Heart left ventricle (tissue), 16 donors: ENCODE measurements at regions of chr11 and their contacts with region 1.

Region 1: DNA sequence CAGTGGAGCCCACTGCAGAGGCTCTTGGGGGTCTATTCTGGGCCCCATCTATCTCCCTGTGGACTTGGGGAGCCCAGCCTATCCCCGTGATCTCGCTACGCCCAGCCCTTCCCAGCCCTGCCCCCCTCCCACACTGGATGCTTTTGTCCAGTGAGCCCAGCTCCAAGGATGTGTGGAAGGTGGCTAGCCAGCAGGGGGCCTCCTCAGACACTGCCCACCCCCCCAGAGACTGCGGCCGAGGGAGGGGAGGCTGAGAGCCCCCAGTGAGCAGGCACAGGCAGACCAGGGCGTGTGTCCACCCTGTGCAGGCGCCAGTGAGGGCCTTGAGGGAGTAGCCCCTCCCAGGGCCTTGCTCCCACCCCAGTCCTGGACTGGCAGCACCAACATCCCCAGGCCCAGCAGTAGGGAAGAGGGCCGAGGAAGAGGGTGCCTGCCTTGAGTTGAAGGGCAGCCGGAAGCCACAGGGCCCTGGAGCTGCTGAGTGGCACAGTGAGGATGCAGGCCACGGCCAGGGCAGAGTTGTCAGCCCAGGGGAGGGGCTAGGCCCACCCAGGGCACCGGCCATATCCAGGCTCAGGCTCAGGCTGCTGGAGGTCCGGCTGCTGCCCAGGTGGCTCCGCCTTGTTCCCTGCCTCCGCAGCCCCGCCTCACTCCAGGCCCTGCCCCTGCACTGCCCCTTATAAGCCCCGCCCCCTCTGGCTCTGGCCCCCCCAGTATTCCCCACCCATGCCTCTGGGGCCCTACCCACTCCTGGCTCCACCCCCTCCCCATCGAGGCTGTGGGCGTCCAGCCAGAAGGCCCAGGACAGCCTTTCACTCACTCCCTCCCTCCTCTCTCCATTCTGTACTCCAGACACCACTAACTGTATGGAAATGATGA is 28.0 kb downstream of the MOB2 start:
- DNase-seq: peak in 4 of 5 donors; percentile 45 to 63 (median 53)
- ATAC-seq: peak; percentile 26 to 49 (median 40)
- H3K4me3 ChIP-seq: peak overlapping the region in 1 of 12 donors; percentile 14
- H3K27ac ChIP-seq: peak overlapping the region in 3 of 12 donors; percentile 5 to 93 (median 50)
- H3K4me1 ChIP-seq: peaks cover 0 to 18% (median 3%) of the 10 kb centered on the region in 12 donors
- H3K27me3 ChIP-seq: no peaks in the 10 kb centered on the region
- CTCF ChIP-seq: peak in 8 of 12 donors; percentile 5 to 43 (median 20)
- POLR2A ChIP-seq: no peak

Region 2: DNA sequence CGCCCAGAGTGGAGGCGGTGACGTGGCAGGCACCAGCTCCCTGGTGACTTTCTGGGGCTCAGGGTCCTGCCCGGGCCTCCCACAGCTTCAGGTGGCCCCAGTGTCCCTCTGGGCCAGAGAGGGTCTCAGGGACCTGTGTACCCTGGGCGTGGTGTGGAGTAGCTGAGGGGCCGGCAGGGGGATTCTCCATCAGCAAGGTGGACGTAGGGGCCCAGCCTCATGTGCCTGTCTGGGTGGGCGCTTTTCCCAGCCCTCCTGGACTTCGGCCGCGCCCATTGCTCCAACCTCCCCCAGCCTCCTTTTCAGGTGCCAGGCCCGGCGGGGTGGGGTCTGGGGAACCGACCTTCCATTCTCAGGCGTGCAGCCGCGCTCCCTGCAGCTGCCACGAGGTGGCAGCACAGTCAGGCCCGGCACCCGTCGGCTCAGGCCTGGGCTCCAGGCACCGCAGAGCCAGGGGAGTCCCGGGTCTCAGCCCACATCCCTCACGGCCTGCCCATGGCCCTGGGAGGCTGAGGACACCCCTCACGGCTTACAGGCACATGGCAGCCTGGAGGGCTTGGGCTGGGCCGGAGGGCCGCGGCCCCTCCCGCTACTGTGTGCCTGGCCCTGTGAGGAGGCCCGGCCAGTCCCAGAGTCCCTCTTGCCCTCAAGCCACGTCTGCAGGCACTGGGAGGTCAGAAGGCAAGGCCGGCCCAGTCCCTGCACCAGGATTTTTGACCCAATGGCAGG is 255.6 kb before region 1 on chr11:
- intact Hi-C with region 1: loop called in 1 of 10 experiments (anchors 10 kb)
- DNase-seq: peak in 4 of 5 donors; percentile 19 to 81 (median 55)
- ATAC-seq: peak; percentile 28 to 84 (median 72)
- H3K4me3 ChIP-seq: no peak overlapping the region
- H3K27ac ChIP-seq: no peak overlapping the region
- H3K4me1 ChIP-seq: peaks cover 0 to 8% (median 0%) of the 10 kb centered on the region in 12 donors
- H3K27me3 ChIP-seq: peaks cover 0 to 35% (median 14%) of the 10 kb centered on the region in 9 donors
- CTCF ChIP-seq: peak; percentile 75 to 94 (median 91)
- POLR2A ChIP-seq: no peak

Region 3: DNA sequence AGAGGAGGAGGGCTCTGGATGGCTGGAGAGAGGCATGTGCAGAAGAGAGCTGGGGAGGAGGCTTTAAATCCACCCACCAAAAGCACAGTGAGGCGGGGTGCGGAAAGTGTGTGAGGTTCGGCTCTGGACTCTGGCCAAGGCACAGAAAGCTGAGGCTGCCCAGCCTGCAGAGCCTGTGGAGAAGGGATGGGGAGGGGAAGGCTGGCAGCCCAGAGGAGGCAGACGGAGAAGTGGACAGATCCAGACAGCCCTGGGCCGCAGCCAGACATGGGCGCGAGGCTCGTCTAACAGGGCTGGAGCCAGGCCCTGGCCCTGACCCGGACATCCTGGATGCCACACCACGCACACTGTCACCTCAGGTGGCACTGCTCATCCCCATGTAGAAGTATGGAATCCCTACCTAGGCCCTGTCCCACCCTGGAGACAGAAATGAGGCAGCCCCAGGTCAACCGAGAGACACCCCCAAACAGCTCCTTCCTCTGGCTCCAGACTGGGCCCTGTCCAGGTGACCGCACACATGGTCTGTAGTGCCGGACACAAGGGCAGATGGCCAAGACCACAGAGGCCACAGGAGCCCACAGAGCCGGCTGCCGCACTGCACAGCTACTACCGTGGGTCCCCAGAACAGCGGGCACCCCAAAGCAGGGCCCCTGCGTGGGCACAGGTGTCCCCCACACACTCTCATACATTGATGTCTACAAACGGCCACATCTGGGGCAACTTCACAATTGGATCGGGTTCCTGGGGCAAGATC is 44.6 kb after region 1 on chr11:
- intact Hi-C with region 1: loop called in 1 of 10 experiments (anchors 5 kb)
- DNase-seq: peak; percentile 51 to 85 (median 75)
- ATAC-seq: peak; percentile 72 to 84 (median 74)
- H3K4me3 ChIP-seq: no peak overlapping the region
- H3K27ac ChIP-seq: peak overlapping the region in 10 of 12 donors; percentile 15 to 69 (median 49)
- H3K4me1 ChIP-seq: peaks cover 34 to 82% (median 63%) of the 10 kb centered on the region in 12 donors
- H3K27me3 ChIP-seq: no peaks in the 10 kb centered on the region
- CTCF ChIP-seq: no peak
- POLR2A ChIP-seq: no peak

Region 4: GRCh38 chr11:1917671-1918516 is 459.3 kb after region 1 on chr11:
- intact Hi-C with region 1: no loop called
- DNase-seq: peak in 4 of 5 donors; percentile 66 to 84 (median 77)
- ATAC-seq: peak; percentile 45 to 67 (median 59)
- H3K4me3 ChIP-seq: peak overlapping the region in 8 of 12 donors; percentile 7 to 40 (median 26)
- H3K27ac ChIP-seq: peak overlapping the region in 11 of 12 donors; percentile 38 to 93 (median 85)
- H3K4me1 ChIP-seq: peaks cover 12 to 66% (median 47%) of the 10 kb centered on the region in 12 donors
- H3K27me3 ChIP-seq: no peaks in the 10 kb centered on the region
- CTCF ChIP-seq: peak; percentile 51 to 78 (median 64)
- POLR2A ChIP-seq: no peak